ENCODE measurements at regions of chr1 and their contacts with region 1.

Region 1: DNA sequence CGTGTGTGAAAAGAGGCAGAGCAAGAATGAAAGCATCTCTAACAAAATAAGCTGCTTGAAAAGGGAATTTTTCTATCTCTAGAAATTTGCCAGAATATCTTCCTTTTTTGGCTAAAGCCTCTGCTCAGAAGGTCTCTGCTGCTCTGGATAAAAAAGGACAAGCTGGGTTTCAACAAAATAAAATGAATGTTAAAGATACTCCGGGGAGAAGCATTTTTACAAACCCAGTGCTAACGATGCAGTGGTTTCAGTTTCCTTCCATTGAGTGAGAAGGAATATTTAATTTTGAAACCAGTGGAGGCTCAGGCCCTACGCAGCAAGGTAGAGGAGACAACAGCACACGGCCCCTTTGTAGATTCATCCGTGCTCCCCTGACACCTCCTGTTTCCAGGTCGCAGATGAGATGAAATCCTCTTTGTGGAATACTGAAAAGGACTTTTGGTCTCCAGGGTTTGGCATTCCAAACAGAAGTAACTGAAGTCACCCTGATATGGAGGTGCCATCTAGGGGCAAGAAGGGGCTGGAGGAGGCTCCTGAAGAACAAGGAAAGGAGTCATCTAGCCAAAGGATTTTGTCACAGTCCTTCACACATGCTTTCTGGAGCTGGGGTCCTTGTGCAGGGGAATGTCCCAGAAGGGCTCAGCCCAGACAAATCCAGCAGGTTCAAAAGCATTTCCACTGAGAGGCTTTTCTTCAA is 65.7 kb upstream of the SYT6 start:
- DNase-seq: no peak

Region 2: GRCh38 chr1:114126261-114127095 is 92.8 kb before region 1 on chr1:
- intact Hi-C with region 1: loop called (anchors 10 kb)
- DNase-seq: peak in 3 of 10 donors; percentile 14 to 32 (median 19)

Region 3: GRCh38 chr1:114610546-114611245 is 391.4 kb after region 1 on chr1:
- intact Hi-C with region 1: no loop called
- DNase-seq: no peak